Sciatic nerve (tissue), 2 donors: ENCODE measurements at regions of chr12 and their contacts with region 1.

Region 1: GRCh38 chr12:61161973-61162372 is 1098.2 kb upstream of the USP15 start:
- DNase-seq: no peak
- ATAC-seq: no peak

Region 2: GRCh38 chr12:61029516-61029915 is 132.5 kb before region 1 on chr12:
- intact Hi-C with region 1: no loop called
- DNase-seq: no peak
- ATAC-seq: no peak

Region 3: GRCh38 chr12:61111218-61111617 is 50.8 kb before region 1 on chr12:
- intact Hi-C with region 1: no loop called
- DNase-seq: no peak
- ATAC-seq: no peak

Region 4: DNA sequence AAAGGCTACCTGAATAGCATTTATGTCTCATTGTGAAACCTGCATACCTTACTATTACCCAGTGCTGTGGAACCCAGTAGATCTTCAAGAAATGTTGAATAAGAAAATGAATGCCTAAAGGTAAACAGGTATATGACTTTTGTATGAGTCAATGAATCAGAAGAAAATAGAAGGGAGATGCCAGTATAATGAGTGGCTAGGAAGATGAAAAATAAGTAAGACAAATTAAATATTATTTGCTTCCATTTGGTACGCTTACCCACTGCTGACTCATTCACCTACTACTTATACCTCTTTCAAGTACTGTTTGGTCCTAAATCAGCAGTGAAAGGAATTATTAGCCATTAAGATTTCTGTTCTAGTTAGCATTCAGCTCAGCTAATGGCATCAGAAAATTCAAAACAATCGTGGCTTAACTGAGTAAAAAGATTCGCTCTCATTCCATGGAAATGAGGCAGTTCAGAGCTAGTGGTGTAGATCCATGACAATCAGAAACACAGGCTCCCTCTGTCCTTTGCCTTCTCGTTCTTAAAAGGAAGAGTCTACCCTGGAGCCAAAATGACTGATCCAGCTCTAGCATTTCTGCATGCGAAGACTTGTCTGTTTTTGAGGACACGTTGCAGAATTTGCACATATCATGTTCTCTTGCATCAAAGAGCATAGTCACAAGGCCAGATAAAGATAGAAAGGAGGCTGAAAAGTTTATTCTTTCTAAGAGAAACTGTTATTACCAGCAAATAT is 392.5 kb after region 1 on chr12:
- intact Hi-C with region 1: loop called (anchors 5 kb)
- DNase-seq: no peak
- ATAC-seq: no peak